PC-3 (cell line): ENCODE measurements at regions of chr2 and their contacts with region 1.

Region 1: GRCh38 chr2:218582076-218582475 is 13.4 kb downstream of the CNOT9 start:
- DNase-seq: peak; percentile 96
- ATAC-seq: peak; percentile 96
- H3K4me3 ChIP-seq: 0 out of 2 replicates have a peak overlapping the region, but pooled peaks have one; percentile 28
- H3K27ac ChIP-seq: peak overlapping the region; percentile 88
- H3K4me1 ChIP-seq: peaks cover 23% of the 10 kb centered on the region
- H3K27me3 ChIP-seq: no peaks in the 10 kb centered on the region
- CTCF ChIP-seq: no peak

Region 2: DNA sequence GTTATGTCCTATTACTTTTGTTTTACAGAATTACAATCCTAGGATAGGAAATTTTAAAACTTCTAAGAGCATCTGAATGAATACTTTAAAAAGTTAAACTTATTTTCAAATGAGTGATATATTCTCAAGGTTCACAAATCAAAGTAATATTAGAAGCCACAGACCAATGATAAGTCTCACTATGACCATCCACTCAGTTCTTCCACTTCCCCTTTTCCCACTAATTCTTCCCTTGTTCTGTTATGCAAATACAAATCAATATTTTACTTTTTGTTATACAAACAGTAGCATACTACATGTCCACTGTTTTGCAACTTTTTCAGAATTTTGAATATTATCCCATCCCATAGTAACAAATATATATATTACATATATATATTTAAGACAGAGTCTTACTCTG is 34.1 kb before region 1 on chr2:
- CTCF ChIA-PET with region 1: no interaction called
- POLR2A ChIA-PET with region 1: no interaction called
- intact Hi-C with region 1: loop called (anchors 2 kb)
- DNase-seq: no peak
- ATAC-seq: no peak
- H3K4me3 ChIP-seq: no peak overlapping the region
- H3K27ac ChIP-seq: no peak overlapping the region
- H3K4me1 ChIP-seq: no peaks in the 10 kb centered on the region
- H3K27me3 ChIP-seq: no peaks in the 10 kb centered on the region
- CTCF ChIP-seq: no peak

Region 3: GRCh38 chr2:218659258-218659987 is 77.3 kb after region 1 on chr2 and contains the starts of genes BCS1L and ZNF142:
- CTCF ChIA-PET with region 1: no interaction called
- POLR2A ChIA-PET with region 1: no interaction called
- intact Hi-C with region 1: no loop called
- DNase-seq: peak; percentile 91
- ATAC-seq: peak; percentile 92
- H3K4me3 ChIP-seq: peak within 1 kb of the TSS; percentile 100
- H3K27ac ChIP-seq: peak within 1 kb of the TSS; percentile 61
- H3K4me1 ChIP-seq: peaks cover 20% of the 10 kb centered on the region
- H3K27me3 ChIP-seq: no peaks in the 10 kb centered on the region
- CTCF ChIP-seq: no peak
- total RNA-seq, gene BCS1L: 41.3 and 48.5 TPM in 2 replicates
- total RNA-seq, gene ZNF142: 35.5 and 36.3 TPM in 2 replicates